ENCODE measurements at regions of chr1 and their contacts with region 1.

Region 1: DNA sequence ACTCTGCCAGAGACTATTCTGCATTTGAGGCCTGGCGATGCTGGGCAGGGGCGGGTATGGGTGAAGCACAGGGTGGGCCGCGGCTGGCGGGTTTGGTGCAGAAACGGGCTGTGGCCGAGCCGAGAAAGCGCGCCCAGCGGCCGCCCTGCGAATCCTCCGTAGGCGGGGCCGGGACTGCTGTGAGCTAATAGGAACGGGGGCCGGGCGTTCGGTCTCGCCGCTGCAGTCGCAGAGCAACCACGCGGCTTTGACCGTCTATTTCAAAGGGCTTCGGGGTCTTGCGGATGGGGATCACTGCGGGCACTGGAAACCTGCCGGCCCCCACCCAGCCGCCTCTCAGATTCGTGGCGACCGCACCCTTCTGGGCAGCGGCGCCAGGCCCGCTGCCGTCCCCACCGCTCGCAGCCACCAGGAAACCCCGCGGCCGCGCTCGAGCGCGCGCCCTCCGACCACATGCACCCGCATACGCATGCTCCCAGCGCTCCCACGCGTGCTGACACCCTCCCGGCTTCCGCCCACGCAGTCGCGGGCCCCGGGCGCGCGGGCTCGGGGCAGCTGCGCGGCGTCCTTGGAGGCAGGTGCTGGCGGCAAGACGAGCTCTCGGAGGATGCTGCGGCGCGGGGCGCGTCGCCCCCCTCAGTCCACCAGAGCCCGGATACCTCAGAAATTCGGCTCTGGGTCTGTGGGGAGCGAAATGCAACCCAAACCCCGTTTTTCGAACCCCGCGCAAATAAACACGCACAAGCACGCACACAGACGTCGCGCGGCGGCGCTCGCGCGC is 32.6 kb downstream of the DNTTIP2 start:
- DNase-seq: peak; percentile 80
- H3K4me3 Mint-ChIP-seq: peak overlapping the region; percentile 85
- H3K27ac Mint-ChIP-seq: peak overlapping the region; percentile 90
- H3K4me1 Mint-ChIP-seq: peaks cover 30% of the 10 kb centered on the region
- H3K27me3 Mint-ChIP-seq: peaks cover 2% of the 10 kb centered on the region

Region 2: DNA sequence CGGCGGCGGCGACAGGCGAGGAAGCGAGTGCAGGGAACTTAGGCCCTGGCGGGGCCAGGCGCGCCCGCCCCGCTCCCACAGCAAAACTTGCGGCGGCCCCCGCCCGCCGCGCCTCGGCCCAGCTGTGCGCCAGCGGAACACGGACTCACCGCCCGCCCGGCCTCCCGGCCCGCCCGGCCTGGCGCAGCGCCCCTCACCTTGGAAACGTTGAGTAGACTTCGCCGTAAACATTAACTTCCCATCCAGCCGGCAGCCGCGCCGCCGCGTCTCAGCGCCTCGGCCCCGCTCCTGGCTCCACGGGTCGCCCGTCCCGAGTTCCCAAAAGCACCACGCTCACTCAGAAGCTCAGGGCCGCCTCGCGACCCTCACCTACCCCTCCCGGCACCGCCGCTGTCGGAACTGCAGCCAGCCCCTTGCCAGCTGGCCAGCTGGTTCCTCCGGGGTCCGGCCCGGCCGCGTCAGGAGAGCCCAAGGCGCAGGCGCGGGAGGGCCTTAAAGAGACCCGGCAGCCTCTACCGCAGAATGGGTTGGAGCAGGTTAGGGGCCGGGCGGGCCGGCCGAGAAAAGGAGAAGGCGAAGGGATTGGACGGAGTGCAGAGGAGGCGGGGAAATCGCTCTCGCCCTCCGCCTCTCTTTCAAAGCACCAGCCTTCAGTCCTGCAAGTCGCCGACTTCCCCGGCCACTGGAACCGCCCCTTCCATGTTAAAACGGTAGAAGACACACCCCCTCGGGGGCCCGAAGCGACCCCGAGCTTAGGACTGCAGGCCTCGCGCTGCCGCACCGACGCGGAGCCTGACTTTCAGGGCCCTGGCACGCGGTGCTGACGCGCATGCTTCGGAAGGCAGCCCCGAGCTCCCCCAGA is 1061.5 kb before region 1 on chr1 and contains the start of gene EVI5:
- intact Hi-C with region 1: loop called (anchors 10 kb)
- DNase-seq: peak; percentile 28
- H3K4me3 Mint-ChIP-seq: peak within 1 kb of the TSS; percentile 75
- H3K27ac Mint-ChIP-seq: peak within 1 kb of the TSS; percentile 61
- H3K4me1 Mint-ChIP-seq: peaks cover 14% of the 10 kb centered on the region
- H3K27me3 Mint-ChIP-seq: peaks cover 77% of the 10 kb centered on the region
- total RNA-seq, gene EVI5: 11.0 and 11.3 TPM in 2 replicates

Region 3: DNA sequence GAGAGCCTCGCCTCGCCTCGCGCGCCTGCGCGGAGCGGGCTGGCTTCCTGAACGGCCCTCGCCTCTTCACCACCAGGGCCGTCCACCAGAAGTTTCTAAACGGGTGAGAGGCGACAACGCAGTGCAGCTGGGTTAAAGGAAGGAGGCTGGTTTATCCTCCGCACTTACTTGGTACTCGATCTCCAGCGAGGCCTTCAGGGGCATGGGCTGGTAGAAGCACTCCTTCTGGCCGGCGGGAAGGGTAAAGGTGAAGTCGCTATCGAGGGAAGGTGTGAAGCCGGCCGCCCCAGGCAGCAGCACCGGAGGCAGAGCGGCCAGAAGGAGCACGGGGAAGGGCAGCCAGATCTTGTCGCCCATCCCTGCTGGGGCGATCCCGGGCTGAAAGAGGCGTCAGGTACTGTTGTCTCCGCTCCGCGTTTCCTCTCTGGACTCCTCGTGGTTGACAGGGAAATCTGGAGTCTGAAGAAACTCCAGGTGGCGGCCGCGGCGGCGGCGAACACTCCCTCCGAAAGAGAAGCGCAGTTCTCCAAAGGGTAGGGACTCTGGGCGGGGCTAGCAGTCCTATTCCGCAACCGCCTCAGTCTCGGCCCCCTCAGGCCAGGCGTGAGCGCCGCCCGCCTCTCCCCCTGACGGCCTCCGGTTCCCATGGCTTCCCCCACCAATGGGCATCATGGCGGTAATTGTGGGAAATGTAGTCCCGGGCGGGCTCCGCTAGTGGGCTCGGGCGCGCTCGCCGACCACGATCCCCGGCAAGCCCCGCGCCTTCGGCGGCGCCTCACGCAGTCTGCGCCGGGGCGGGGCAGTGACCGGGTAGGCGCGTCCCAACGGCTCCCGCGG is 666.3 kb before region 1 on chr1 and contains the start of gene TMED5:
- intact Hi-C with region 1: loop called (anchors 1 kb)
- DNase-seq: peak; percentile 98
- H3K4me3 Mint-ChIP-seq: peak within 1 kb of the TSS; percentile 93
- H3K27ac Mint-ChIP-seq: peak within 1 kb of the TSS; percentile 96
- H3K4me1 Mint-ChIP-seq: peaks cover 57% of the 10 kb centered on the region
- H3K27me3 Mint-ChIP-seq: no peaks in the 10 kb centered on the region
- total RNA-seq, gene TMED5: 46.7 and 48.7 TPM in 2 replicates

Region 4: GRCh38 chr1:93437976-93438605 is 408.3 kb before region 1 on chr1:
- intact Hi-C with region 1: loop called (anchors 2 kb)
- DNase-seq: no peak
- H3K4me3 Mint-ChIP-seq: no peak overlapping the region
- H3K27ac Mint-ChIP-seq: no peak overlapping the region
- H3K4me1 Mint-ChIP-seq: no peaks in the 10 kb centered on the region
- H3K27me3 Mint-ChIP-seq: peaks cover 39% of the 10 kb centered on the region

Region 5: GRCh38 chr1:93680757-93681550 is 165.4 kb before region 1 on chr1:
- intact Hi-C with region 1: loop called (anchors 5 kb)
- DNase-seq: peak; percentile 19
- H3K4me3 Mint-ChIP-seq: peak overlapping the region; percentile 84
- H3K27ac Mint-ChIP-seq: no peak overlapping the region
- H3K4me1 Mint-ChIP-seq: peaks cover 12% of the 10 kb centered on the region
- H3K27me3 Mint-ChIP-seq: peaks cover 72% of the 10 kb centered on the region

Region 6: DNA sequence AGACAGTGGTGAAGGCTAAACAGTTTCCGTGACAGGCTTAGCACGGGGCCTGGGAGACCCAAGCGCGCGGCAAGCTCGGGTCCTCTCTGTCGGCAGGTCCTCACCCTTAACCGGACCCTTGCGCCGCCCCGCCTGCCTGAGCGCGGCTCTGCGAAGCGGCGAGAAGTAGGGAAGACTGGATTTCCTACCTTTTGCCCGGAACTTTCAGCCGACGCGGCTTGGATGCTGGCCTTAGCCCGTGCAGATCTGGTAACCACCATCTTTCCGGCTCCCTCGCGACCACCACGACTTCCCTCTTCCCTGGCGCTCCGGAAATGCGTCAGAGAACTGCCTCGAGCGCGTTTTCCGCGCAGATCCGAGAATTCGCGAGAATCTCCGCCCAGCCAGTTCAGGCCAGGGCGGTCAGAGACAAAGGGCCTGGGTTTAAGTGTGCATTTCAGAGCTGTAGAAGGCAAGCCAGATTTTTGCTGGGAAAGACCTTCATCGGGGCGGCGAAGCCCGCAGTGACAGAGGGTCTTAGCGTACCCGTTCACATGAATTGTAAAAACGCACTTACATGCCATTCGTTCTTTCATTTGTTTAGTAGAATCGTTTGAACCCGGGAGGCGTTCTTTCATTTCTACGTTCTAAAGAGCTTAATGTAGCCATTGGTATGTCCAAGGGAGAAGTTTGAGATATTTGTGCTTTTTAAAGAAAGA is 32.6 kb after region 1 on chr1 and contains the start of gene DNTTIP2:
- intact Hi-C with region 1: loop called (anchors 1 kb)
- DNase-seq: peak; percentile 86
- H3K4me3 Mint-ChIP-seq: peak within 1 kb of the TSS; percentile 95
- H3K27ac Mint-ChIP-seq: peak within 1 kb of the TSS; percentile 98
- H3K4me1 Mint-ChIP-seq: peaks cover 55% of the 10 kb centered on the region
- H3K27me3 Mint-ChIP-seq: no peaks in the 10 kb centered on the region
- total RNA-seq, gene DNTTIP2: 80.3 and 90.8 TPM in 2 replicates

Measured in activated T-helper 1 cell treated with anti-CD3 and anti-CD28 coated beads, Interleukin-12 subunit alpha, Interleukin-12 subunit beta, Interleukin-2, Interleukin-4 antibody, amounts not matched to agents 30 ng/mL and 10 ng/mL and 1 ng/mL, durations not matched to agents 14 hours and 24 hours and 36 hours (primary cell).